ENCODE measurements at regions of chr4 and their contacts with region 1.

Region 1: DNA sequence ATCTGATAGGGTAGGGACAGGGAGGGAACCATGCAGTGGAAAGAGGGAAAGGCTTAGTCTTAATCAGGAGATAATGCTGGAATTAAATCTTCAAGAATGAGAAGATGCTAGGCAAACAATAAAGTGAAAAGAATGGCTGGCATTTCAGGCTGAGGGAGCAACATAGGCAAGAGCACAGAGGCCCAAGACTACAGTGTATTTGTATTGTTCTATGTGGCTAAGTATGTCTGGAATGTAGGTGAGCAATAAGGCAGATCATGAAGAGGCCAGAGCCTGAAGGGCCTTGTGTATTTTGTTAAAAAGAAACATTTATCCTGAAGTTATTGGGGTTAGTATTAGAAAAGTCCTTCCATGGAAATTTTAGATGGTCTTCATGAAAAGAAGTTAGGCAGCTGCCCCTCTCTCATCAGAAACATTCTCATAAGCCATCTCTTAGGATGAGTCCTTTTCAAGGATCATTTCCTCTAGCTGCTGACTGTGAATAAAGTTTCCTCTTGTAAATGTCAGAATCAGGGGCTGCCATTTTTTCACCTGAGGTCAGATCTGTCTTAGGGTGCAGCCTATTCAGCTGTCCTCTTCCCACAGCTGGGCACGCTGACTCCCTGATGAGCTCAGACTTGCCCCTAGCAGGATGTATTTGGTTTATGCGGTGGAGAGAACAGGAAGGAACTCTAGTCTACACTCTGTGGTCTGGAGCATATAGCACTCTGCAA is 46.3 kb downstream of the ATP10D start:
- DNase-seq: peak; percentile 66
- H3K4me3 Mint-ChIP-seq: no peak overlapping the region
- H3K27ac Mint-ChIP-seq: peak overlapping the region; percentile 1
- H3K4me1 Mint-ChIP-seq: peaks cover 33% of the 10 kb centered on the region
- H3K27me3 Mint-ChIP-seq: no peaks in the 10 kb centered on the region

Region 2: GRCh38 chr4:46947005-46947404 is 584.4 kb before region 1 on chr4:
- CTCF ChIA-PET with region 1: no interaction called
- POLR2A ChIA-PET with region 1: no interaction called
- intact Hi-C with region 1: no loop called
- DNase-seq: no peak
- H3K4me3 Mint-ChIP-seq: no peak overlapping the region
- H3K27ac Mint-ChIP-seq: no peak overlapping the region
- H3K4me1 Mint-ChIP-seq: no peaks in the 10 kb centered on the region
- H3K27me3 Mint-ChIP-seq: peaks cover 3% of the 10 kb centered on the region

Region 3: DNA sequence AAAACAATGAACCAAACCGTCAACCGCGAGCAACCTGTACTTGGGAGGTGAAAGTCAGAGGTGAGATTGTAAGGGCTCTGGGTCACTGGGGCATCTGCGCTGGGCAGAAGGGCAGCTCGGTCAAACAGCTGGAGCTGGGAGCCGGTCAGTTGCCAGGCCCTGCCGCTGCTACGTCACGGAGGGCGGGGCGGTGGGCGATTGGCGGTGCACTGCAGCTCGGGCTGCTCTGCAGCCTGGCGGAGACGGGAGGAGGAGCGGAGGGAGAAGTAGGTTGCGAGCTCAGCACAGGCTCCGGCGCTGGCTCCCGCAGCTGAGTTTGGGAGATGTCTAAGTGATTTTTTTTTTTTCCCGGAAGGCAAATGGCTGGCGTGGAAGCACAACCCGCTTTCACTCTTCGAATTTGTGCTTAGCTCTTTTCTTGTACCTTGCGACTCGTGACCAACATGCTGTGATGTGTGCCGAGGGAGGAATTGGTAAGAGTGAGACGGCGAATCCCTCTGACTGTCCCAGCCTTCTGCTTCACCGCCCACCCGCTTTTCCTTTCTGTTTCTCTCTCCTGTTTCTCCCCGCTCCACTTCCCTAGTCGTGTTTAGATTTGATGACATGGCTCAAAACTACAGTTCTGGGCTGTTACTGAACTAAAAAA is 46.2 kb before region 1 on chr4 and contains the start of gene ATP10D:
- CTCF ChIA-PET with region 1: no interaction called
- POLR2A ChIA-PET with region 1: no interaction called
- intact Hi-C with region 1: loop called (anchors 1 kb)
- DNase-seq: peak; percentile 86
- H3K4me3 Mint-ChIP-seq: peak within 1 kb of the TSS; percentile 90
- H3K27ac Mint-ChIP-seq: peak within 1 kb of the TSS; percentile 76
- H3K4me1 Mint-ChIP-seq: peaks cover 20% of the 10 kb centered on the region
- H3K27me3 Mint-ChIP-seq: no peaks in the 10 kb centered on the region
- total RNA-seq, gene ATP10D: 2.8 to 3.0 TPM